Astrocyte of the cerebellum (primary cell): ENCODE measurements at regions of chr9 and their contacts with region 1.

Region 1: GRCh38 chr9:107489687-107490605 is at the start of gene KLF4:
- DNase-seq: peak; percentile 82
- H3K4me3 ChIP-seq: peak within 1 kb of the TSS; percentile 55
- CTCF ChIP-seq: no peak

Region 2: GRCh38 chr9:107102677-107103076 is 387.3 kb before region 1 on chr9:
- in situ Hi-C with region 1: no loop called
- DNase-seq: no peak
- H3K4me3 ChIP-seq: no peak overlapping the region
- CTCF ChIP-seq: no peak

Region 3: GRCh38 chr9:107597743-107598217 is 107.8 kb after region 1 on chr9:
- in situ Hi-C with region 1: no loop called
- DNase-seq: no peak
- H3K4me3 ChIP-seq: no peak overlapping the region
- CTCF ChIP-seq: no peak

Region 4: DNA sequence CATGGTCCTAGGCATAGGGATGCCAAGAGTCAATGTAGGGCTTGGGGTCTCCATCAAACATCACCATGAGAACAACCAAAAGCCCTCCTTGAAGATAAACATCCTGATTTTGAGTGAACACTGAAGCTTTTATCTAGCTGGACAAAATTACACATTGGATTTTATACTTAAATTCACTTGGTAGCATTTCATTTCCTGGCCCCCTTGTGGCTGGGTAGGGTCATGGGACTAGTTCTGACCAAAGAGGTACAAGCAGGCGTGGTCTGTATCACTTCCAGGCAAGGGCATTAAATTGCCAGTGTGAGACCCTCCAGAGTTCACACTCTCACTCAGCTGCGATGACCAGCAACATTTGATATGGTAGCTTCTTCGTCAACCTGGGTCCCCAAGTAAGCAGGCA is 1045.6 kb after region 1 on chr9:
- in situ Hi-C with region 1: loop called (anchors 25 kb)
- DNase-seq: no peak
- H3K4me3 ChIP-seq: no peak overlapping the region
- CTCF ChIP-seq: peak; percentile 39